ENCODE measurements at regions of chr3 and their contacts with region 1.

Region 1: DNA sequence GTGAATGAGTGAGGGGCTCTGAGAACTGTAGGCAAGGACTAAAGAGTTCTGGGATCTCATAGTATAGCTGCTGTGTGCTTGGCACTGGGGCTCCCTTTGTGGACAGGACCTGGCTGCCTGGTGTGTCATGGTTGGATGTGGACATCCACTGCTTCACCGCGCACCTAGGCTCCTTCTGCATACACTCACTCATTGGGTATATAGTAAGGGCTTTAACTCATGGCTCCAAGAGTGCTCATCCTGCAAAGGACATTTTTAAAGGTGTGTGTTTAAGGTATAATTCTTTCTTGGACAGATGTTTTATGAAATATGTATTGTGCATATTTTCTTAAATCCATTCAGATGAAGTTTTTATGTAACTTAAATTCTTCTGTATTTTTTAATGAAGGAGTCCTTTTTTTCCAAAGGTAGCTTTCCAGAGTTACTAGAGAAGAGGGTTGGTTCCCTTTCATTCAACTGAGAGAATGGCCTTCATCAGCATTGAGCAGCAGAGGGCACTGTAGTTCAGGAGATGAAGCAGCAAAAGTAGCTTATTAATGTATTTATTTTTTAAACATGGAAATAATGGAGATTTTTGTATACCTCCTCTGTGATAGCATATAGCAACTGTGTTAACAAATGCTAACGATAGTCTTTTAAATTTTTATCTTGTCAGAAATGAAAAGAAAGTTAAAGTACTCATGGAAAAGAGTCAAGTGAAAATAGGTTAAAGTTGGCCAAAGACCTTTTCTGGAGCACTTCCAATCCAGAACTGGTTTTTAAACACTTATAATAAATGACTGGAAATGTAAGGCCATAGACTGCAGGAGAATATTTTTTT is 25.2 kb downstream of the OXNAD1 start:
- DNase-seq: peak; percentile 69
- H3K4me3 Mint-ChIP-seq: peak overlapping the region; percentile 81
- H3K27ac Mint-ChIP-seq: peak overlapping the region; percentile 92
- H3K4me1 Mint-ChIP-seq: peaks cover 83% of the 10 kb centered on the region
- H3K27me3 Mint-ChIP-seq: no peaks in the 10 kb centered on the region

Region 2: GRCh38 chr3:16270855-16271254 is 19.4 kb before region 1 on chr3:
- CTCF ChIA-PET with region 1: interaction called, 75 read pairs
- POLR2A ChIA-PET with region 1: interaction called, 12 read pairs
- DNase-seq: no peak
- H3K4me3 Mint-ChIP-seq: no peak overlapping the region
- H3K27ac Mint-ChIP-seq: no peak overlapping the region
- H3K4me1 Mint-ChIP-seq: peaks cover 29% of the 10 kb centered on the region
- H3K27me3 Mint-ChIP-seq: no peaks in the 10 kb centered on the region

Region 3: GRCh38 chr3:16300881-16301359 is 10.7 kb after region 1 on chr3:
- CTCF ChIA-PET with region 1: interaction called, 51 read pairs
- POLR2A ChIA-PET with region 1: interaction called, 36 read pairs
- DNase-seq: peak; percentile 69
- H3K4me3 Mint-ChIP-seq: peak overlapping the region; percentile 74
- H3K27ac Mint-ChIP-seq: peak overlapping the region; percentile 94
- H3K4me1 Mint-ChIP-seq: peaks cover 89% of the 10 kb centered on the region
- H3K27me3 Mint-ChIP-seq: no peaks in the 10 kb centered on the region

Region 4: DNA sequence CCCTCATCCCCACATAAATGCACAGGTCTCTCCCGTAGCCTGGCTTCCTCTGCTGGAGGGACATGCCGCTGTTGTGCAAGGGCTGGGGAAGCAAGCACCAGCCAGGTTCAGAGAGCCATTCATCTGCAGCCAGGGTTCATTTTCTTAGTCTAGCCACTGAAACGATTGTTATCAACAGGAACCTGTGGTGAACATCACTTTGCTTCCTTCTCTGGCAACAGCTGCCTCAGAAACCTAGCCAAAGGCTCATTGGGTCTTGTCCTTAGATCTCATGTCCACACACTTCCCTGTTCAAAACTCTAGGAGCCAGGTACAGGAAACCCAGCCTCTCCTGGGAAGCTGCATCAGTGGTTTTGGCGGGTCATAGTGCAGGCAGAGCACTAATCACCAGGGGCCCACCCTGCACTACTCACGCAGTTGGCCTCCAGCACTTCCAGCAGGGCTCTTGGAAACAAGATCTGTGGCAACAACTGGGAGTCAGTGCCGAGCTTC is 21.8 kb after region 1 on chr3:
- CTCF ChIA-PET with region 1: interaction called, 163 read pairs
- POLR2A ChIA-PET with region 1: interaction called, 60 read pairs
- DNase-seq: peak; percentile 71
- H3K4me3 Mint-ChIP-seq: peak overlapping the region; percentile 54
- H3K27ac Mint-ChIP-seq: peak overlapping the region; percentile 87
- H3K4me1 Mint-ChIP-seq: peaks cover 87% of the 10 kb centered on the region
- H3K27me3 Mint-ChIP-seq: no peaks in the 10 kb centered on the region

Region 5: DNA sequence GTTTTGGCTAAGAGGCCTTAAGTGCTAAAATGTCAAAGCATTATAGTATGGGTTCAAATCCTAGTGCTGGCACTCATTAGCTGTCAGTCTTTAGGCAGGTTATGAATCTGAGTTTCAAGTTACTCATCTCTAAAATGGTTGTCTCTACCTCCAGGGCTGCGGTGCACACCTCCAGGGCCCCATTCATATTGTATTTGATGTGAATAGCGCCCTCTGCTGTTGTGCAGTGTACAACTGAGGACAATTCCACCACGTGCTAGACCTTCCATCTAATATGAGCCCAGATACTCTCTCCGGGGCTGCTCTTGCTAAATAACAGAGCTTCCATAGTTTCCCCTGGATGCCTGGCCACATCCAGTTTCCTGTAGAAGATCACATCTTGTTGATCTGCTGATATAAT is 29.1 kb after region 1 on chr3:
- CTCF ChIA-PET with region 1: interaction called, 163 read pairs
- POLR2A ChIA-PET with region 1: interaction called, 60 read pairs
- DNase-seq: peak; percentile 85
- H3K4me3 Mint-ChIP-seq: no peak overlapping the region
- H3K27ac Mint-ChIP-seq: peak overlapping the region; percentile 72
- H3K4me1 Mint-ChIP-seq: peaks cover 58% of the 10 kb centered on the region
- H3K27me3 Mint-ChIP-seq: no peaks in the 10 kb centered on the region

Region 6: GRCh38 chr3:16402451-16402850 is 112.2 kb after region 1 on chr3:
- CTCF ChIA-PET with region 1: no interaction called
- POLR2A ChIA-PET with region 1: no interaction called
- DNase-seq: no peak
- H3K4me3 Mint-ChIP-seq: no peak overlapping the region
- H3K27ac Mint-ChIP-seq: no peak overlapping the region
- H3K4me1 Mint-ChIP-seq: peaks cover 14% of the 10 kb centered on the region
- H3K27me3 Mint-ChIP-seq: no peaks in the 10 kb centered on the region

Region 7: DNA sequence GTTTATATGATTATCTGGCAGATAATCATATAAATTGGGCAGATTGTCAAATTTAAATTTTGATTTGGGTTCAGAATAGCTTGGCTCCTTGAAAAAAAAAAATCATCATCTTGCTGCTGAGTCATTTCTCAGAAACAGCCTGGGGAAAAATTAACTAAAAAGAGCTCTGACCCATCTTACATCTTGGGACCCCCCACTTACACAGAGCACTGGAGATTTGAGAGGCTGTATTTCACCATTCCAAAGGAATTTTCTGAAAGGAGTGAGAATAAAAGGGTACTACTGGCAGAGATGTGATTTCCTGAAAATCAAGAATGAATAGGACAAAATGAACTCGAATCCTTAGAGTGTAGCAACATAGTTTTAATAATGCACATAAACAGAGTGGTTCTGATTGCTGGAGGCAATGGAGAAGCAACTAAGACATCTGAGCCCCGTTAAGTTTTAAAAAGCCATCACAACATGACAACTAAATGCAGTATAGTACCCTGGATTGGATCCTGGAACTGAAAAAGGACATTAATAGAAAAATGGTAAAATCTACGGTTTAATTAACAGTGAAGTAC is 125.8 kb after region 1 on chr3:
- CTCF ChIA-PET with region 1: no interaction called
- POLR2A ChIA-PET with region 1: no interaction called
- DNase-seq: no peak
- H3K4me3 Mint-ChIP-seq: no peak overlapping the region
- H3K27ac Mint-ChIP-seq: no peak overlapping the region
- H3K4me1 Mint-ChIP-seq: peaks cover 9% of the 10 kb centered on the region
- H3K27me3 Mint-ChIP-seq: no peaks in the 10 kb centered on the region

Region 8: GRCh38 chr3:16550676-16551341 is 260.6 kb after region 1 on chr3:
- CTCF ChIA-PET with region 1: interaction called, 29 read pairs
- POLR2A ChIA-PET with region 1: interaction called, 3 read pairs
- DNase-seq: peak; percentile 78
- H3K4me3 Mint-ChIP-seq: no peak overlapping the region
- H3K27ac Mint-ChIP-seq: peak overlapping the region; percentile 12
- H3K4me1 Mint-ChIP-seq: peaks cover 8% of the 10 kb centered on the region
- H3K27me3 Mint-ChIP-seq: peaks cover 17% of the 10 kb centered on the region